HCT116 (cell line): ENCODE measurements at regions of chr17 and their contacts with region 1.

Region 1: DNA sequence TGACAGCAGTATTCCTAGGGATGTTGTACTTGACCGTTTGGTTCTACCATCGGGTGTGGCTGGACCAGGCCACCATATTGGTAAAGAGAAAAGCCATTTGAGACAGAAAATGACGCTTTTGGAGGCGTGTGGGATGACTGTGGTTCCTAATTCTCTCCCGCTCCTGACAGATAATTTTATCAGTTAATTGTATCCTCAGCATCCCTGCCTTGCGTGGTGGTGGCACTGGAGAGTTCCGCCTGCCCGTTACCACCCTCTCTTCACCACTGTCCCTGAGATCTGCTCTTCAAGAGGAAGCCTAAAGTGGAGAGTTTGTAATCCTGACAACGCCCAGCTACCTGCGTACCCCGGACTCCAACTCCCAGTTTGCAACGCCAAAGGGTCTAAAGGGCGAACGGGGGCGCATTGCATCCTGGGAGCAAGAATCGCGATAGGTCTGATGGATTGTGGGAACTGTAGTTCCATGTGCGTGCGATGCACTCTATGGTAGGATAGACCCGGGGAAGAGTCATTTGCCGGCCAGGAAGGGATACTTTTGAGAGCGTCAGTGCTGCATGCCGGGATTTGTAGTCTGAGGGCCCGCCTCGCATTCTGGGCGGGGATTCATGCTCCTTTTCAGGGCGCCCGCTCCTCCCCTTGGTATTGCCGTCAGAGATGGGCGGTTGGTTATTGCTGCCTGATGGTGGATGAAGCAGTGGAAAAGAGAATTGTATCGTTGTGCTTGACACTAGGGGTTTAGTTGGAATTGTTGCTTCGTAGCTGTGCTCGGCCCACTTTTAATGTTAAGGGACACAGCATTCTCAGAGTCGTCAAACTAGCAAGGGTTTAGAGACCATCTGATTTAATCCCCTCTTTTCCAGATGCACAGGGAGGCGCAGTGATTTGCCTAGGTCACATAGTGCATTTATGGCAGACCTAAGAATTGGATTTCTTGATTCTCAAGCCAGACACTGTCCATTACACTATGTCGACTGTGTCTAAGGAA is 965 bp upstream of the PHF12 start:
- DNase-seq: peak; percentile 99
- ATAC-seq: peak; percentile 79
- H3K4me3 ChIP-seq: peak overlapping the region; percentile 69 to 81
- H3K27ac ChIP-seq: peak overlapping the region; percentile 93
- H3K4me1 ChIP-seq: peaks cover 16 to 28% of the 10 kb centered on the region in 2 experiments
- H3K27me3 ChIP-seq: no peaks in the 10 kb centered on the region
- CTCF ChIP-seq: no peak
- POLR2A ChIP-seq: peak; percentile 57
- RAD21 ChIP-seq: no peak

Region 2: DNA sequence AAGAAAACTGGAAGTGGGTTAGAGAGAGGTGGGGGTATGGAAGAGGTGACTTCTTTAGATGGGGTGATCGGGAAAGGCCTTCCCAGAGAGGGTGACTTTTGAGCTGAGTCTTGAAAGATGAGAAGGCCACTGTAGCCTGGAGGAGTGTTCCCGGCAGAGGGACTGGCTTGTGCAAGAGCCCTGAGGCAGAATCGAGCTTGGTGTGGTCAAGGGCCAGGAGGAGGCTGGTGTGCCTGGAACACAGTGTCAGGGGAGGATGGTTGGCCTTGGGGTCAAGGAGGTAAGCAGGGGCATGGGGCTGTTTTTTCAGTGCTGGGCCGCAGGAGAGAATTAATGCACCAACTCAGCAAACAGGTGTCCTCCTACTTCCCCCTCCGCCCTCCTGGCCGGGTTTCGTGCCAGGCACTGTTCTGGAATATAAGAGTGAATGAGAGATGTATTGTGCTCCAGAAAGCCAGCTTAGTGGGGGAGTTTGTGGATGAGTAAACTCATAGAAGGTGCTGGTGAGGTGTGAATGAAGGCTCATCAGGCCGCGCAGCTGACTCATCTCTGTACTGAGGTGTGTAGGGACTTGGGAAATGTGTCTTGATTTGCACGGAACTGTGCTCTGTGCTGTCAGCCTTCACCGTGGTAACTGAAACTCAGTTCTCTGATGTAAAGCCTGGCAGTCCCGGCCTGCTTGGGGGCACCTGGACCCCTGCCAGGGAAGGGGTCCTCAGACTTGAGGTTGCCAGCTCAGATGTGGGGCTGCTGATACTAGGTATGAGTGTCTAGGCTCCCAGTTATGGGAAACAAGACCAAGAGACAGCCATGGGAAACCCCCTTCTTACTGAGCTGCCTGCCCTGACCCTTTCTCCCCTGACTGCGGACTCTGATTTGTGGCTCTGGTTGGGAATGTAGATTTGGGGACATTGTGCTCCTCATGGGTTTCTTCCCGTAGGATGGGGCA is 1480.7 kb before region 1 on chr17:
- CTCF ChIA-PET with region 1: no interaction called
- POLR2A ChIA-PET with region 1: no interaction called
- RAD21 ChIA-PET with region 1: no interaction called
- intact Hi-C with region 1: no loop called
- DNase-seq: peak; percentile 41
- ATAC-seq: peak; percentile 73
- H3K4me3 ChIP-seq: peak overlapping the region in 1 of 2 experiments; percentile 13; a peak in 1 of 4 replicates
- H3K27ac ChIP-seq: peak overlapping the region; percentile 21; the same call in 1 of the 2 replicates
- H3K4me1 ChIP-seq: peaks cover 24 to 39% of the 10 kb centered on the region in 2 experiments
- H3K27me3 ChIP-seq: no peaks in the 10 kb centered on the region
- CTCF ChIP-seq: no peak
- POLR2A ChIP-seq: no peak
- RAD21 ChIP-seq: no peak

Region 3: DNA sequence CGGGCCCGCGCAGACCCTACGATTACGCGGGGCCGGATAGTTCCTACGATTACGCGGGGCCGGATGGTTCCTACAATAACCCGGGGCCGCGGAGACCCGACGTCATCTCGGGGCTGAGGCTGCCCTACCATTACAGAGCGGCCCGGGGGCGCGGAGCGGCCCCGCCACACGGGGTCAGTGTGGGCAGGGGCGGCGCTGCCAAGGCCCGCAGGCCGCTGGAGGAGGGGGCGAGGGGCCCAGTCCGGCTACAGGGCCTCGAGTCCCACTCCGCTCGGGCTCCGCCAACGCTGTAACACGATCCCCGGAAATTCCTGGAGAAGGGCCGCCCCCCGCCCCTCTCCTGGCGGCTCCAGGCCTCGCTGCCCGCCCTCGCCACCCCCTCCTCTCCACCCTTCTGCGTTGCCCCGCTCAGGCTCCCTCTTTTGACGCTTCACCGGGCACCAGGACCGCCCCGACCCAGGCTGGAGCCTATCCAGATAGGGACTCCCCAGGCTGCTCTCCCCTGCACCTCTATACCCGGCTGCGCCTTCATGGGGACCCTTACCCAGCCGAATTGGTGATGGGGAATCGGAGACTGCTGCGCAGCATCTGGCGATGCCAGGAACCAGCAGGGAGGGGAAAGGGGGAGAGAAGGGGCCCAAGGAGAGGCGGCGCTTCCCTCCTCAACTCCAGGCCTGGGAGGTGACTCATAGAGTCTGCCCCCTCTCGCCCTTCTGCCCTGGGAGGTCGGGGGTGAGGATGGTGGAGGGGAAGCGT is 234.5 kb before region 1 on chr17 and contains the start of gene RAB34:
- CTCF ChIA-PET with region 1: interaction called, 13 read pairs
- POLR2A ChIA-PET with region 1: interaction called, 25 read pairs
- RAD21 ChIA-PET with region 1: no interaction called
- intact Hi-C with region 1: loop called (anchors 2 kb)
- DNase-seq: no peak
- ATAC-seq: no peak
- H3K4me3 ChIP-seq: peak within 1 kb of the TSS; percentile 98 to 99; a peak in 3 of 4 replicates
- H3K27ac ChIP-seq: peak within 1 kb of the TSS; percentile 89
- H3K4me1 ChIP-seq: peaks cover 22 to 32% of the 10 kb centered on the region in 2 experiments
- H3K27me3 ChIP-seq: no peaks in the 10 kb centered on the region
- CTCF ChIP-seq: no peak
- POLR2A ChIP-seq: peak; percentile 67
- RAD21 ChIP-seq: no peak
- total RNA-seq, gene RAB34: 0.59 TPM

Region 4: DNA sequence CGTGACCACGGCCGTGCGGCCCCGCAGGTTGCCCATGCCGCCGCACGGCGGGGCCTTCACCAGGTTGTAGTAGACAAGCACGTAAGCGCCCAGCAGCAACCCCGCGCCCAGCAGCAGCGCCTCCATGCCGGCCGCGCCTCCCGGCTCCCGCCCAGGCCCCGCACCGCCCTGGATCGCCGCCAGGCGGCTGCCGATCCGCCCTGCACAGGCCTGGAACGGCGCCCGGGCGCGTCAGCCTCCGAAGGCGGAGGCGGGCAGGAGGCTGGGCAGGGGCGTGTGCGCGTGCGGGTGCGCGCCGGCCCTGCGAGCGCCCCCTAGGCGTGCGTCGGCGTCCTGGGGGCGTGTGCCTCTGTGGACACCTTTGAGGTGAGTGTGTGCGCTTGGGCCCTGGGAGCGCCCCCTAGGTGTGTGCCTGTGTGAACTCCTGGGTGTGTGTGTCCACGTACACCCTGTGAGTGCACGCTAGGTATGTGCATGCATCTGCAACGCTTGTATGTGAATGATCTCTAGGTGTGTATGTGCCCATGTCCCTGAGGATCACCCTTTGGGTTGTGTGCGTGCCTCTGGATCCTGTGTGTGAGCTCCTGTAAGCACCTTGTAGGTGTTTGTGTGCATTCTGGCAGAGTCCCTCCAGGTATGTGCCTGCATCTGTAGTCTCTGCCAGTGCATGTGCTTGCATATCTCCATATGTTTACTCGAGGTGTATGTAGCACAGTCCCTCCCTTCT is 49.3 kb before region 1 on chr17 and contains the start of gene DHRS13:
- CTCF ChIA-PET with region 1: interaction called, 11 read pairs
- POLR2A ChIA-PET with region 1: interaction called, 5 read pairs
- RAD21 ChIA-PET with region 1: no interaction called
- intact Hi-C with region 1: loop called (anchors 1 kb)
- DNase-seq: peak; percentile 91
- ATAC-seq: peak; percentile 95
- H3K4me3 ChIP-seq: peak within 1 kb of the TSS; percentile 70 to 84
- H3K27ac ChIP-seq: peak within 1 kb of the TSS; percentile 69
- H3K4me1 ChIP-seq: peaks cover 11 to 22% of the 10 kb centered on the region in 2 experiments; a peak in 3 of 4 replicates
- H3K27me3 ChIP-seq: no peaks in the 10 kb centered on the region
- CTCF ChIP-seq: peak; percentile 96 to 99 (median 97)
- POLR2A ChIP-seq: peak; percentile 58
- RAD21 ChIP-seq: peak; percentile 68
- total RNA-seq, gene DHRS13: 13.5 TPM

Region 5: GRCh38 chr17:28935744-28936460 is 16.4 kb before region 1 on chr17:
- CTCF ChIA-PET with region 1: no interaction called
- POLR2A ChIA-PET with region 1: no interaction called
- RAD21 ChIA-PET with region 1: no interaction called
- intact Hi-C with region 1: no loop called
- DNase-seq: no peak
- ATAC-seq: no peak
- H3K4me3 ChIP-seq: no peak overlapping the region
- H3K27ac ChIP-seq: no peak overlapping the region
- H3K4me1 ChIP-seq: no peaks in the 10 kb centered on the region
- H3K27me3 ChIP-seq: no peaks in the 10 kb centered on the region
- CTCF ChIP-seq: no peak
- POLR2A ChIP-seq: no peak
- RAD21 ChIP-seq: no peak

Region 6: GRCh38 chr17:29116804-29117772 is 164.8 kb after region 1 on chr17:
- CTCF ChIA-PET with region 1: interaction called, 15 read pairs
- POLR2A ChIA-PET with region 1: interaction called, 4 read pairs
- RAD21 ChIA-PET with region 1: interaction called in 1 of 2 experiments, 3 read pairs
- intact Hi-C with region 1: no loop called
- DNase-seq: no peak
- ATAC-seq: peak; percentile 77
- H3K4me3 ChIP-seq: no peak overlapping the region
- H3K27ac ChIP-seq: no peak overlapping the region
- H3K4me1 ChIP-seq: 0 out of 4 replicates have a peak, but pooled peaks cover 0 to 3% of the 10 kb centered on the region in 2 experiments
- H3K27me3 ChIP-seq: no peaks in the 10 kb centered on the region
- CTCF ChIP-seq: peak; percentile 65 to 94 (median 90); a peak in 5 of 6 replicates
- POLR2A ChIP-seq: no peak
- RAD21 ChIP-seq: peak; percentile 77